Mammary epithelial cell (primary cell): ENCODE measurements at regions of chr17 and their contacts with region 1.

Region 1: DNA sequence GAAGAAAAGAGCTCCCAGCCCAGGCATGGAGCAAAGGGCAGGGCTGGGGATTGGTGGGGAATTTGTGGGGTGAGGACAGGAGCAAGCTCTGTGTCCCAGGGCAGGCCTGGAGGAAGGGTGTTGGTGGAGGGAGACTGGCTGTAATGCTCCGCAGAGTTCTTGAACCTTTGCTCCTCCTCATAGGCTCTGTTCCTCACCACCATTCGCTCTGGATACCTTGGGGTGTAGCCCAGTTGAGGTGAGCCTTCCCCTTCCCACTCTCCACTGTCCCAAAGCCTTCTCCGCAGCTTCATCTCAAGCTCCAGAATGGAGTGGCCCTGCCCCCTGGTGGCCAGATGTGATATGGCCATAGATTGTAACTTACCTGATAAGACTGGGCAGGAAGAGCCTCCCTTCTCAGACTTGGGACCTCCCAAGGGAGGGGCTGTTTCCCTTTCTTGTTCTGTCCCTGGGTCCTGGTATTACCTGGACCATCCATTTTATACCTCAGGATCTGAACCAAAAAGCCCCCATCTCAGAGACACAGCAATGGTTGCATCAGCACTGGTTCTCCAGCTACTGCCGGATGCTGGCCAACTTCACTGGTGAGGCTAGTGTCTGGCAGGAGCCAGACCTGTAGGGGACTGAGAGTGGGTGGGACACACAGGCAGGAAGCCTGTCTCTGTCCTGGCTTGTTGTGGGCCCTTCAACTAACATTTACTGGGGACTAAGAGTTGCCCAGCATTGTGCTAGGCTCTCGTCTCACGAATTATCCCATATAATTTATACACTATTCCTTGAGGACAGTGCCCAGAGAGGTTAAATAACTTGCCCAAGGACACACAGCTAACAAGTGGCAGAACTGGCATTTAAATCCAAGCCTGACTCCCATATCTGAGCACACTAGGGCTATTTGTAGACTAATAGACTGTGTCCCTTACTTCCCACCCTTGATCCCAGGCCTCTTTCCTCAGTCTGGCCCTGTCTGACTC is 19.1 kb upstream of the STAC2 start:
- DNase-seq: peak; percentile 75
- H3K4me3 ChIP-seq: no peak overlapping the region
- H3K27ac ChIP-seq: no peak overlapping the region
- H3K4me1 ChIP-seq: peaks cover 8% of the 10 kb centered on the region
- H3K27me3 ChIP-seq: no peaks in the 10 kb centered on the region
- CTCF ChIP-seq: peak; percentile 90 to 95

Region 2: DNA sequence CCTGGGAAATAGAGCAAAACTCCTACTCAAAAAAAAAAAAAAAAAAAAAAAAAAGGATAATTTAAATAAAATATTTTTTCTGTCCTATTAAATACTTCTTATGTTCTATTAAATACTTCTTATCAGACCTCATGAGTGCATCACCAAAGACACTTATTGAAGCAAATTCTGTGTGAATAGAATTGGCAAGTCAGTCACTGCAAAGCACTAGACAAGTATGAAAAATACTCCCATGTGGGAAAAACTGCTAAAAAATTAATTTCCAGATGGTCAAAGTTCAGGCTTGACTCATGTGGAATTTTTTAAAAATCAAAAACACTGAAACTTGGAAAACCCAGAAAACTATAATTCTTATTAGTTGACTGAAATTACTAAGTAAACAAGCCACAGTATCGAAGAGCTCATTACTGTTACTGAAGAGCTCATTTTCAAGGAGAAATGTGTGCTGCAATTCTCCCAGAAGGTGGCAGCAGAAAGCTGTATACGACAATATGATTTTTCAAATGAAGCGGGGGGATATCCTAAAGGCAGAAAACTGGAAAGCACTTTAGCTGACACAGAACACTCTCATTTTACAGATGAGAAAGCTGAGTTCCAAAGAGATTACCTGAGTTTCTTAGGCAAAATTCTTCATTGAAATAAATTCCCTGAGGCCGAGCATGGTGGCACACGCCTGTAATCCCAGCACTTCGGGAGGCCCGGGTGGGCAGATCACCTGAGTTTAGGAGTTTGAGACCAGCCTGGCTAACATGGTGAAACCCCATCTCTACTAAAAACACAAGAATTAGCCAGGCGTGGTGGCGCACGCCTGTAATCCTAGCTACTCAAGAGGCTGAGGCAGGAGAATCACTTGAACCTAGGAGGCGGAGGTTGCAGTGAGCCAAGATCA is 261.8 kb before region 1 on chr17:
- CTCF ChIA-PET with region 1: interaction called, 48 read pairs
- dilution Hi-C with region 1: no loop called
- in situ Hi-C with region 1: no loop called
- intact Hi-C with region 1: loop called (anchors 1 kb)
- DNase-seq: peak; percentile 38
- H3K4me3 ChIP-seq: no peak overlapping the region
- H3K27ac ChIP-seq: no peak overlapping the region
- H3K4me1 ChIP-seq: no peaks in the 10 kb centered on the region
- H3K27me3 ChIP-seq: no peaks in the 10 kb centered on the region
- CTCF ChIP-seq: peak; percentile 77 to 85

Region 3: GRCh38 chr17:39164675-39165143 is 80.2 kb before region 1 on chr17:
- CTCF ChIA-PET with region 1: interaction called, 10 read pairs
- dilution Hi-C with region 1: loop called (anchors 5 kb)
- in situ Hi-C with region 1: no loop called
- intact Hi-C with region 1: no loop called
- DNase-seq: peak; percentile 71
- H3K4me3 ChIP-seq: no peak overlapping the region
- H3K27ac ChIP-seq: no peak overlapping the region
- H3K4me1 ChIP-seq: peaks cover 10% of the 10 kb centered on the region
- H3K27me3 ChIP-seq: no peaks in the 10 kb centered on the region
- CTCF ChIP-seq: peak; percentile 78 to 89

Region 4: GRCh38 chr17:39209317-39210092 is 35.4 kb before region 1 on chr17:
- CTCF ChIA-PET with region 1: interaction called, 6 read pairs
- dilution Hi-C with region 1: no loop called
- in situ Hi-C with region 1: loop called in 1 of 2 experiments (anchors 5 kb)
- intact Hi-C with region 1: loop called (anchors 1 kb)
- DNase-seq: no peak
- H3K4me3 ChIP-seq: no peak overlapping the region
- H3K27ac ChIP-seq: no peak overlapping the region
- H3K4me1 ChIP-seq: peaks cover 22% of the 10 kb centered on the region
- H3K27me3 ChIP-seq: no peaks in the 10 kb centered on the region
- CTCF ChIP-seq: no peak

Region 5: GRCh38 chr17:39219647-39220154 is 25.2 kb before region 1 on chr17:
- CTCF ChIA-PET with region 1: no interaction called
- dilution Hi-C with region 1: no loop called
- in situ Hi-C with region 1: no loop called
- intact Hi-C with region 1: no loop called
- DNase-seq: no peak
- H3K4me3 ChIP-seq: no peak overlapping the region
- H3K27ac ChIP-seq: no peak overlapping the region
- H3K4me1 ChIP-seq: peaks cover 6% of the 10 kb centered on the region
- H3K27me3 ChIP-seq: peaks cover 12% of the 10 kb centered on the region
- CTCF ChIP-seq: no peak

Region 6: DNA sequence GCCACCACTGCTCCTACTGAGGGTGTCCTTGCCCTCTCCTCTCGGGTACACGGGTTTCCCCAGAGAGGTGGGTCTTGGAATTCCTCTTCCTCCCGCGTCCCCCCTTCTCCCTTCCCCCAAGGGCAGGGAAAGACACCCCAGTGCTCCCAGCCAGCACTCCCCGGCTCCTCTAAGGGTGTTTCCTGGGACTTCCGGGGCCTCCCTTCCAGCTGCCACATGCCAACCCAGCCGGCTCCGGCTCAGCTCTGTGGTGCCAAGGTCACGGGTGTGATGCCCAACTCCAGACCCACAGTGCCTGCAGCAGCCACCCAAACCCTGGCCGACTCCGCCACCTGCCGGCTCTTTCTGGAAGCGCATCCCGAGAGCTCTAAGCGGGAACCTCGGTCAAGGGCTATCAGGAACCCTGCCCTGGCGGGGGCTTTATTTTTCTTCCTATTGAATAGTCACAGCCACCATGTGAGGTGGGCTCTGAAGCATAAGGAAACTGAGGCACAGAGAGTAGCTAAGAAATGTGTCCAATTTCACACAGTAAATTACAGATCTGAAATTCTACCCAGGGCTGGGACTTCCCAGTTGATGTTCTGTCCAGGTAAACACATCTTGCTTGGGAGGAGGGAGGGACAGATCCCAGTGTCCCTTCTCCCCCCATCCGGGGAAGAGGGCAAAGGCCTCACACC is 378.5 kb after region 1 on chr17:
- CTCF ChIA-PET with region 1: no interaction called
- dilution Hi-C with region 1: no loop called
- in situ Hi-C with region 1: no loop called
- intact Hi-C with region 1: no loop called
- DNase-seq: peak; percentile 45
- H3K4me3 ChIP-seq: no peak overlapping the region
- H3K27ac ChIP-seq: no peak overlapping the region
- H3K4me1 ChIP-seq: peaks cover 19% of the 10 kb centered on the region
- H3K27me3 ChIP-seq: peaks cover 10% of the 10 kb centered on the region
- CTCF ChIP-seq: peak; percentile 82 to 93